Activated naive CD8-positive, alpha-beta T cell treated with anti-CD3 and anti-CD28 coated beads, Interleukin-2, amount 10 ng/mL, durations not matched to agents 7 days and 5 days (primary cell): ENCODE measurements at regions of chr20 and their contacts with region 1.

Region 1: GRCh38 chr20:31684153-31685015 is 38.3 kb downstream of the BCL2L1 start:
- DNase-seq: no peak
- ATAC-seq: peak; percentile 51
- H3K4me3 Mint-ChIP-seq: peak overlapping the region; percentile 35
- H3K27ac Mint-ChIP-seq: peak overlapping the region; percentile 87
- H3K4me1 Mint-ChIP-seq: peaks cover 69% of the 10 kb centered on the region
- H3K27me3 Mint-ChIP-seq: no peaks in the 10 kb centered on the region

Region 2: GRCh38 chr20:31605031-31605901 is 79.1 kb before region 1 on chr20 and contains the start of gene ID1:
- POLR2A ChIA-PET with region 1: no interaction called
- DNase-seq: peak; percentile 88
- ATAC-seq: peak; percentile 90
- H3K4me3 Mint-ChIP-seq: peak within 1 kb of the TSS; percentile 84
- H3K27ac Mint-ChIP-seq: peak within 1 kb of the TSS; percentile 11
- H3K4me1 Mint-ChIP-seq: peaks cover 20% of the 10 kb centered on the region
- H3K27me3 Mint-ChIP-seq: peaks cover 70% of the 10 kb centered on the region
- total RNA-seq, gene ID1: 0.72 to 1.2 TPM

Region 3: GRCh38 chr20:31661625-31662371 is 22.6 kb before region 1 on chr20:
- POLR2A ChIA-PET with region 1: interaction called, 10 read pairs
- DNase-seq: peak; percentile 86
- ATAC-seq: peak; percentile 73
- H3K4me3 Mint-ChIP-seq: peak overlapping the region; percentile 84
- H3K27ac Mint-ChIP-seq: peak overlapping the region; percentile 87
- H3K4me1 Mint-ChIP-seq: peaks cover 42% of the 10 kb centered on the region
- H3K27me3 Mint-ChIP-seq: no peaks in the 10 kb centered on the region

Region 4: GRCh38 chr20:31731321-31731717 is 46.9 kb after region 1 on chr20:
- POLR2A ChIA-PET with region 1: no interaction called
- DNase-seq: no peak
- ATAC-seq: no peak
- H3K4me3 Mint-ChIP-seq: no peak overlapping the region
- H3K27ac Mint-ChIP-seq: no peak overlapping the region
- H3K4me1 Mint-ChIP-seq: peaks cover 2% of the 10 kb centered on the region
- H3K27me3 Mint-ChIP-seq: peaks cover 12% of the 10 kb centered on the region

Region 5: GRCh38 chr20:31934968-31935764 is 250.8 kb after region 1 on chr20:
- POLR2A ChIA-PET with region 1: no interaction called
- DNase-seq: no peak
- ATAC-seq: no peak
- H3K4me3 Mint-ChIP-seq: no peak overlapping the region
- H3K27ac Mint-ChIP-seq: no peak overlapping the region
- H3K4me1 Mint-ChIP-seq: no peaks in the 10 kb centered on the region
- H3K27me3 Mint-ChIP-seq: peaks cover 15% of the 10 kb centered on the region